ENCODE measurements at regions of chr6 and their contacts with region 1.

Region 1: GRCh38 chr6:135176464-135176863 is 4.6 kb upstream of the MYB start:
- H3K4me3 ChIP-seq: no peak overlapping the region
- H3K27ac ChIP-seq: no peak overlapping the region
- H3K4me1 ChIP-seq: no peaks in the 10 kb centered on the region
- CTCF ChIP-seq: no peak

Region 2: DNA sequence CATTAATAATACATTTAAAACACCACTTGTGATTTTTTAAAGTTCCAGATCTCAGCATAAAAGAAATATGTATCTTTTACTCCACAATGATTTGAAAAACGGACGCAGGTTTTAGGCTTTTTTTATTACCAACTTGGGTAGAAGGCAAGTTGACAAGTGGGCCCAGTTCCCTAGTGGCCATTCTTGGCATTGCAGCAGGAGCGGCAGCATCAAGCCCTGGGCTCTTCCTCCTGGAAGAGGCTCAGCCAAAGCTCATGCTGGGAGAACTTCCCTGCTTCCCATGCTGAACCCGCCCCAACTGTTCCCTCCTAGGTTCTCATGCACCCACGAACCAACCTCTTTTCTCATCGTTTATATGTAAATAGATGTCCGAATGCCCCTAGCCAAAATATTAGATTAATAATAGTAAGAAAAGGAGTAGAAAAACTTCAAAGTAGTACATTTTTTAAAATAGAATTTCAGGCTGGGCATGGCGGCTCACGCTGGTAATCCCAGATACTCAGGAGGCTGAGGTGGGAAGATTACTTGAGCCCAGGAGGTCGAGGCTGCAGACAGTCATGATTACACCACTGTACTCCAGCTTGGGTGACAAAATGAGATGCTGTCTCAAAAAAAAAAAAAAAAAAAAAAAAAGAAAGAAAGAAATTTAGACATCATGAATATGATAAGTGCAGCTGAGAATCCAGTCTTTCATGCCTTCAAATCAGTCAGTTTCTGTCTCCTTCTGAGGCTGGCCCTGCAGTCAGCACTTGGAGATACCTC is 13.6 kb before region 1 on chr6:
- CTCF ChIA-PET with region 1: interaction called, 14 read pairs
- POLR2A ChIA-PET with region 1: no interaction called
- H3K4me3 ChIP-seq: no peak overlapping the region
- H3K27ac ChIP-seq: no peak overlapping the region
- H3K4me1 ChIP-seq: no peaks in the 10 kb centered on the region
- CTCF ChIP-seq: 0 out of 2 replicates have a peak, but pooled peaks have one; percentile 16

Region 3: GRCh38 chr6:135393289-135393688 is 216.8 kb after region 1 on chr6:
- CTCF ChIA-PET with region 1: no interaction called
- POLR2A ChIA-PET with region 1: no interaction called
- H3K4me3 ChIP-seq: no peak overlapping the region
- H3K27ac ChIP-seq: no peak overlapping the region
- H3K4me1 ChIP-seq: no peaks in the 10 kb centered on the region
- CTCF ChIP-seq: no peak

Region 4: GRCh38 chr6:135555550-135555949 is 379.1 kb after region 1 on chr6:
- CTCF ChIA-PET with region 1: no interaction called
- POLR2A ChIA-PET with region 1: no interaction called
- H3K4me3 ChIP-seq: no peak overlapping the region
- H3K27ac ChIP-seq: no peak overlapping the region
- H3K4me1 ChIP-seq: no peaks in the 10 kb centered on the region
- CTCF ChIP-seq: no peak